Upper lobe of right lung (tissue), 1 donor: ENCODE measurements at regions of chr12 and their contacts with region 1.

Region 1: DNA sequence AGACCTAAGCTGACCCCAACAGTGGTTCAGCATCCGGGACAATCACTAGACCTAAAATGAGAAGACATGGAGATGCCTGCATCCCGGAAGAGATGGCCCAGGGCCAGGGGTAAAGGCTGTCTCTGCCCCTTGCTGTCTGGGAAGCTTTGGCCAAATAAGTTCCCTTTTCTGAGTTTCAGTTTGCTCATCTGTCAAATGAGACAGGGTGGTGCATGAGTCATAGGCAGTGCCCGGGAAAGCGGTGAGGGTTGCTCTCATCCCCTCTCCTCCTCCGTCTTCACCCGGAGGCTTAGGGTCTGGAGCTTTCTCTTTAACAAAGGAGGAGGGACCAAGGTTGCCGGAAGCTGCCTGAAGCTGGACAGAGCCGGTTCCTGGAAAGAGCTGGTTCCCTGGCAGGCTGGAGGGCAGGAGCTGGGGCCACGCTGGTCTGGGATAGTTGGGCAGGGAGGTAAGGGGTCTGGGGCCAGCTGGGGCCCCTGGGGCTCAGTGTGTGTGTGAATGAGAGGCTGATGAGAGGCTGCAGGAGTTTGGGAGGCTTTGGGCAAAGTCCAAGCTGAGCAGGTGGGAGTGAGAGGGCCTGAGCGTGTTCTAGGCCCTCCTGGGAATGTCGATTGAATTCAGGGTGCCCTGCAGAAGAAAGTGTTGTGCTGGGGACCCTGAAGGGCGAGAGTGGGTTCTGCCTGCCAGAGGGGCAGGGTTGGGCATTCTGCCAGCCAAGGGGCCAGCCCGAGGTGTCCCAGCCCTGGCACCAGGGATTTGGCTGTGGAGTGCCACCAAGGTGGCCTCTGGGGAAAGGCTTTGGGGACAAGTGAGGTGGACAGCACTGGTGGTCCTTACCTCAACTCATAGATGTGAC is at the start of gene SDSL:
- DNase-seq: peak; percentile 88
- ATAC-seq: peak; percentile 94
- H3K4me3 ChIP-seq: peak within 1 kb of the TSS; percentile 59
- H3K27ac ChIP-seq: peak within 1 kb of the TSS; percentile 77
- H3K4me1 ChIP-seq: peaks cover 28% of the 10 kb centered on the region
- H3K27me3 ChIP-seq: no peaks in the 10 kb centered on the region
- CTCF ChIP-seq: no peak
- total RNA-seq, gene SDSL: 10.7 TPM

Region 2: DNA sequence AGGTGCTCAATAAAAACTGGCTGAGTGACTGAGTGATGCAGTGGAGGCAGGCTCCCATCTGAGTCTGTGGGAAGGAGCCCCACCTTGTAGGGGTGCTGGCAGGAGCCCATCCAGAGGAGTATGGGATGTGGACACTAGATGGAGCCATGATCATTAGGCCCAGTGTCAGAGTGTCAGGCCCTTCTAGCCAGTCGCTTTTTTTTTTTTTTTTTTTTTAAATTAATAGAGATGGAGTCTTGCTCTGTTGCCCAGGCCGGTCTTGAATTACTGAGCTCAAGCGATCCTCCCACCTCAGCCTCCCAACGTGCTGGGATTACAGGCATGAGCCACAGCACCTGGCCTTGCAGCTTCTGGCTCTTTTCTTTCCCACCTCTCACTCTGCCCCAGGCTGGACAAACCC is 225.3 kb before region 1 on chr12:
- intact Hi-C with region 1: loop called (anchors 10 kb)
- DNase-seq: no peak
- ATAC-seq: peak; percentile 94
- H3K4me3 ChIP-seq: no peak overlapping the region
- H3K27ac ChIP-seq: no peak overlapping the region
- H3K4me1 ChIP-seq: peaks cover 6% of the 10 kb centered on the region
- H3K27me3 ChIP-seq: no peaks in the 10 kb centered on the region
- CTCF ChIP-seq: peak; percentile 74